A673 (cell line): ENCODE measurements at regions of chr1 and their contacts with region 1.

Region 1: GRCh38 chr1:5637171-5637570 is 355.1 kb downstream of the NPHP4 start:
- DNase-seq: peak; percentile 51
- H3K4me3 ChIP-seq: no peak overlapping the region
- H3K27ac ChIP-seq: no peak overlapping the region
- H3K4me1 ChIP-seq: no peaks in the 10 kb centered on the region
- H3K27me3 ChIP-seq: peaks cover 3% of the 10 kb centered on the region
- CTCF ChIP-seq: peak; percentile 66

Region 2: DNA sequence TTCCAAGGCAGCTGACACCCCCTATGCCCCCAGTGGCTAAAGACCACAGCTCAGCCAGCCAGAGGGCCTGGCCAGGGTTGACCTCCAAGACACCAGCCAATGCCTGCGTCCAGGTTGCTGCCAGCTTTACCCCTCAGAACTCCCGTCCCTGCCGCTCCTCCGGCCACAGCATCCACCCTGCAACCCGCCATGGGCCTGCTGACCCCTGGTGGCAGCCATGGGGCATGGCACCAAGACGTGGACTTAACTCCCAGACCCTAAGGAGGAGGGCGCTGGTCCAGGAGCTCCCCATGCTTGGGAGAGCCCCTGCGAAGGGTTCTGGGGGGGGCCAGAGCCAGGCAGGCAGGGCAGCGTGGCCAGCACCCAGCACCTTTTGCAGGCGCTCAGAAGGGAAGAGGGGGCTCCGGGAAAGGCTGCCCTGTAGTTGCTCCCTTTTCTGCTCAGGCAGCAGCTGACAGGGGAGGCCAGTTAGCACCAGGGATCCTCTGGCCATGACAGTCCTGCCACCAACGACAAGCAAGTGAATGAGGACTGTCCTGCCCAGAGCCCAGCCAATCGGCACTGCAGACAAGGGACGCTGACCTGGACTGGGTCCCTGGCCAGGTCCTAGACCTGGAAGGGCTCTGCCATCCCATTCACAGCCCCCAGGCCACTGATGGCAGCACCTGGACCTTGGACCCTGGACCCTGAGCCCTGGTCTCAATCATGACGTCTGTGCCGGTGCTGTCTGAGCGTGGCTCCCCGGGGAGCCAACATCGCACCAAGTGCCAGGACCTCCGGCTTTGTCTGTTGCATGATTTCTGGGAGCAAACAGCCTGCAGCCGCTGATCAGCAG is 108.8 kb after region 1 on chr1:
- CTCF ChIA-PET with region 1: no interaction called
- POLR2A ChIA-PET with region 1: no interaction called
- intact Hi-C with region 1: loop called (anchors 5 kb)
- DNase-seq: peak; percentile 84
- H3K4me3 ChIP-seq: no peak overlapping the region
- H3K27ac ChIP-seq: no peak overlapping the region
- H3K4me1 ChIP-seq: peaks cover 22% of the 10 kb centered on the region
- H3K27me3 ChIP-seq: no peaks in the 10 kb centered on the region
- CTCF ChIP-seq: peak; percentile 97

Region 3: DNA sequence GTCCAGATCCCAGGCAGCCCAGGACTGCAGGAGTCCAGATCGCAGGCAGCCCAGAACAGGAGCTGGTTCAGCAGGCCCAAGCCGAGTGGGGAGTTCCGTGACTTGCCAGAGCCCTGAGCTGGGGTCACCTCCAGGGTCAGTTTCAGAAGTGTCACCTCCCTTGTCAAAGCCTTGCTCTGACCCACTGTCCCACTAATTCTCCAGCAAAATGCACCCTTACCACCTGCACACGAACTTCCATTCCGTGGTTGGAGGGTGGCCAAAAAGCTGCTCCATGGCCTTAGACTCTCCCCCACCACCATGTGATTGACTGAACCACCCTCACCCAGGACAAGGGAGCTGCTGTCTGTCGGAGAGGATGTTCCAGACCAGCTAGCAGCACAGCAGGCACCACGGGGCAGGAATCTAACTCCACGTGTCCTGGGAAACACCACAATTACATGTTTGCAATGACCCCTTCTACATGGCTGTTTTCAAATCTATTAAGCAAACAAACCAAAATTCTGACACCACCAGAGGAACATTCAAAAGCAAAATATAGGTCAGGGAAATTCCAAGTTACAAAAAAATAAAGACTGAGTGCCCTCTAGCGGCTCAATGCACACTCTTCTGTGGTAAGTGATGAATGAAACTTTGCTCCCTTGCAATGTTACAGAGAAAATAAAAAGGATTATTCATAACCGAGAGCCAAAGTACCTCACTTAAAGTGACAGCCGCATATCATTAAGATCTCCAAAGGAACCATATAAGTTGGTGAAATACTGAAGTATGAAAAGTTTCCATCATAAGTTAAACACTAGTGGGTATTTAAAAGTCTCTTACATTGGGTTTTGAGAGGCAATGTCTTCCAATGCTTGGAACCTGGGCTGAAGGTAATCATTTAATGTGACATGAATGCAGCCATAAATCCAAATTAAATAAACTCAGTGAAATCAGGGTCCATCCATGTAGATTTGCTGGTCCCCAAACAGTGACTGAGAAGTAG is 278.7 kb after region 1 on chr1:
- CTCF ChIA-PET with region 1: no interaction called
- POLR2A ChIA-PET with region 1: no interaction called
- intact Hi-C with region 1: loop called (anchors 2 kb)
- DNase-seq: peak; percentile 74
- H3K4me3 ChIP-seq: no peak overlapping the region
- H3K27ac ChIP-seq: no peak overlapping the region
- H3K4me1 ChIP-seq: peaks cover 32% of the 10 kb centered on the region
- H3K27me3 ChIP-seq: no peaks in the 10 kb centered on the region
- CTCF ChIP-seq: peak; percentile 87